AG04450 (cell line): ENCODE measurements at regions of chr1 and their contacts with region 1.

Region 1: GRCh38 chr1:6205849-6206519 is at the start of gene RNF207:
- DNase-seq: no peak
- H3K4me3 ChIP-seq: peak within 1 kb of the TSS; percentile 58
- H3K27ac ChIP-seq: peak within 1 kb of the TSS; percentile 57
- H3K27me3 ChIP-seq: no peaks in the 10 kb centered on the region
- CTCF ChIP-seq: no peak
- polyA plus RNA-seq, gene RNF207: 7.2 and 8.7 TPM in 2 replicates

Region 2: GRCh38 chr1:6052543-6053205 is 153.3 kb before region 1 on chr1:
- CTCF ChIA-PET with region 1: interaction called, 16 read pairs
- POLR2A ChIA-PET with region 1: no interaction called
- DNase-seq: peak; percentile 36
- H3K4me3 ChIP-seq: no peak overlapping the region
- H3K27ac ChIP-seq: no peak overlapping the region
- H3K27me3 ChIP-seq: peaks cover 2% of the 10 kb centered on the region
- CTCF ChIP-seq: peak; percentile 56

Region 3: GRCh38 chr1:6191968-6192367 is 14.0 kb before region 1 on chr1:
- CTCF ChIA-PET with region 1: interaction called, 18 read pairs
- POLR2A ChIA-PET with region 1: interaction called, 3 read pairs
- DNase-seq: no peak
- H3K4me3 ChIP-seq: no peak overlapping the region
- H3K27ac ChIP-seq: no peak overlapping the region
- H3K27me3 ChIP-seq: no peaks in the 10 kb centered on the region
- CTCF ChIP-seq: no peak

Region 4: GRCh38 chr1:6445062-6445763 is 239.2 kb after region 1 on chr1:
- CTCF ChIA-PET with region 1: no interaction called
- POLR2A ChIA-PET with region 1: no interaction called
- DNase-seq: no peak
- H3K4me3 ChIP-seq: no peak overlapping the region
- H3K27ac ChIP-seq: no peak overlapping the region
- H3K27me3 ChIP-seq: peaks cover 61% of the 10 kb centered on the region
- CTCF ChIP-seq: peak; percentile 64